Cardiac septum (tissue), 1 donor: ENCODE measurements at regions of chr16 and their contacts with region 1.

Region 1: DNA sequence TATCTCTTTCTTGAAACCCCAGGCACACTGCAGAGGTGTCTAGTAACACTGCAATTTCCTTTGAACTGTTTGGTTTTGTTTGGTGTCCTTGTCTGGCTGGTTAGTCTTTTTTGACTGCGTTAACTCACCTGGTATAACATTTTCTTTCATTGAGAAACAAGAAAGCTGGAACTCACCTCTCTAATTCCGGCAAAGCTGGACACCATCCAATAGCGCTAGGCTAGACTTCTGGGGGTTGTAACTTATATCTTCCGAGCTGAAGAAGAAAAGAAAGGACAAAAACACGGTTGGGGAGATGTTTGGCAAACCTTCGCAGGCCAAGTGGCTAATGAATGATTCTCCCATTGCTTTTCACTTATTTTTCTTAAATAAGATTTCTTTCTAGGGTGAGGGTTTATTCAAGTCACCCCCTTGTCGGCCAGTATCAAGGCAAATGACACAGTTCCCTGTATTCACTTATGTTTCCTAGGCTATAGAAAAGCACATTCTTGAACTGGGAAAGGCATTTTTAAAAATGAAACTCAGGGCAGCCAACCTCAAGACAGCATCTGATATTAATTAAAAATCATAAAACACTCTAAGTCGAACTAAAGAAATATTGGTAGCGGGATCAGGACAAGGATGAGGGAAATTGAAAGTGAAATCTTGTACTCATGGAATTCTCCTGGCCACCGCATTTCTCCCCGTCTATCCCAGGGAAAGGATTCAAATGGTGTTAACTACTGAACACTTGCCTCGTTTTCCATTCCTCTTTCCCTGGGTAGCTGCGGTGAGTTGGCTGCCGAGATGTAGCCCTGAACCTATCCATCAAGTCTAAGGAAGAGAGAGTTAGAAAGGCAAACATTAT is 95.9 kb upstream of the ZFHX3 start:
- DNase-seq: no peak

Region 2: DNA sequence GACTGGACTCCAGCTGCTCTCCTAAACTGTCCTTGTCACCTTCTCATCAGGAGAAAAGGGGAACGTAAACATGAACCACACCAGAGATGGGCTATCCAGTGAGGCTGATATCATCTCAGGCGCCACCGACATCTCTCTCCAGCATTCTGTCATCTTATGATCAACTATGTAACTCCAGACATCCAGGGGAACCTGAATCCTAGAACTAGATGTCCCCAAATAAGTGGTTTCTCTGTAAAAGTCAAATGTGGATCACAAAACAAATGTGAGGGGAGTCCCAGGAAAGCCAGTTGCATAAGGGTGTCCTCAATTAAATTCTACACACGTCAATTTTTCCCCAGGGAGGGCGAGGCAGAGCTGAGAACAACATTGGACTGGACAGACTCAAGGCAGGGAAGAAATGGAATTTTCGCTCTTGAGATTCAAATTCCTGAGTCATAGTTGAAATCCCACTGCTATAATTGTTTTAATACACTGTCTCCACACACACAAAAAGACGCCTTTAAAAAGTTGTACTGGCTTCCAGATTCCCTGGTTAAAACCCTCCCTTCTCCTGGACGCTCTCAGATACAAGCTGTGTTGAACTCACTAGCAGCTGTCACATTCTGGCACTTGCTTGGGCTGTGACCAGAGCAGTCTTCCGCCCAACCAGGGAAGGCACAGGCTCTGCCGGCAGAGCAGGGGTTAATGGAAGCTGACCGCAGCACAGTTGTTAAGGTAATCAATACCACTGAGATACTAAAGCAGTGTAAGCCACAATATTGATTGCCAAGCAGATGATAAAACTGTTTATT is 158.5 kb before region 1 on chr16:
- intact Hi-C with region 1: no loop called
- DNase-seq: no peak

Region 3: GRCh38 chr16:73068541-73069401 is 75.0 kb before region 1 on chr16:
- intact Hi-C with region 1: loop called (anchors 5 kb)
- DNase-seq: no peak